Mammary epithelial cell (primary cell): ENCODE measurements at regions of chr2 and their contacts with region 1.

Region 1: GRCh38 chr2:70498054-70498453 is 55.6 kb downstream of the TGFA start:
- DNase-seq: no peak
- H3K4me3 ChIP-seq: no peak overlapping the region
- H3K27ac ChIP-seq: no peak overlapping the region
- H3K4me1 ChIP-seq: peaks cover 14% of the 10 kb centered on the region
- H3K27me3 ChIP-seq: no peaks in the 10 kb centered on the region
- CTCF ChIP-seq: peak; percentile 32 to 48

Region 2: DNA sequence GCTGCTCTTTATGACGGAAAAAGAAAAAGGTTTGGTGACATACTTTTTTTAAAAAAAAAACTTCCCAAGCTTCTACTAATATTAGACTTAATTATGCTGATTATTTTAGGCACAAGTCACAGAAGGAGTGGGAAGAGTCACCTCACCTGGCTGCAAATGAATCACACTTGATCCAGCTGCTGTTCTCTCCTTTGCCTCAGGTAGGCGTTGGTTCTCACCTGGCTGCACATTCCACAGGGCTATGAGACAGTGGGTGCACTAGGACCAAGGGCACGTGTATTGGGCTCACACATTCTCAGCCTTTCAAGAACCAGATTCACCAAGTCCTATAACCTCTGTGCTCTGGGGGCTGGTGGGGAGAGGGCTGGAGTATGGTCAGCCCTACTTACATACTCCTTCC is 37.7 kb before region 1 on chr2:
- CTCF ChIA-PET with region 1: no interaction called
- dilution Hi-C with region 1: loop called (anchors 5 kb)
- in situ Hi-C with region 1: no loop called
- intact Hi-C with region 1: no loop called
- DNase-seq: peak; percentile 24
- H3K4me3 ChIP-seq: no peak overlapping the region
- H3K27ac ChIP-seq: no peak overlapping the region
- H3K4me1 ChIP-seq: peaks cover 6% of the 10 kb centered on the region
- H3K27me3 ChIP-seq: no peaks in the 10 kb centered on the region
- CTCF ChIP-seq: peak; percentile 51 to 58

Region 3: GRCh38 chr2:70541481-70542020 is 43.5 kb after region 1 on chr2:
- CTCF ChIA-PET with region 1: no interaction called
- dilution Hi-C with region 1: no loop called
- in situ Hi-C with region 1: loop called in 1 of 2 experiments (anchors 10 kb)
- intact Hi-C with region 1: no loop called
- DNase-seq: peak; percentile 79
- H3K4me3 ChIP-seq: no peak overlapping the region
- H3K27ac ChIP-seq: peak overlapping the region; percentile 77
- H3K4me1 ChIP-seq: peaks cover 24% of the 10 kb centered on the region
- H3K27me3 ChIP-seq: no peaks in the 10 kb centered on the region
- CTCF ChIP-seq: no peak

Region 4: GRCh38 chr2:70647873-70648481 is 149.9 kb after region 1 on chr2:
- CTCF ChIA-PET with region 1: no interaction called
- dilution Hi-C with region 1: no loop called
- in situ Hi-C with region 1: loop called in 1 of 2 experiments (anchors 25 kb)
- intact Hi-C with region 1: no loop called
- DNase-seq: peak; percentile 51
- H3K4me3 ChIP-seq: no peak overlapping the region
- H3K27ac ChIP-seq: no peak overlapping the region
- H3K4me1 ChIP-seq: no peaks in the 10 kb centered on the region
- H3K27me3 ChIP-seq: no peaks in the 10 kb centered on the region
- CTCF ChIP-seq: peak; percentile 100

Region 5: GRCh38 chr2:70726947-70727725 is 229.1 kb after region 1 on chr2:
- CTCF ChIA-PET with region 1: no interaction called
- dilution Hi-C with region 1: no loop called
- in situ Hi-C with region 1: no loop called
- intact Hi-C with region 1: no loop called
- DNase-seq: peak; percentile 71
- H3K4me3 ChIP-seq: no peak overlapping the region
- H3K27ac ChIP-seq: no peak overlapping the region
- H3K4me1 ChIP-seq: no peaks in the 10 kb centered on the region
- H3K27me3 ChIP-seq: no peaks in the 10 kb centered on the region
- CTCF ChIP-seq: no peak